ENCODE measurements at regions of chr2 and their contacts with region 1.

Region 1: GRCh38 chr2:28392297-28393113 is at the start of gene FOSL2:
- DNase-seq: peak; percentile 95
- H3K4me3 Mint-ChIP-seq: peak within 1 kb of the TSS; percentile 87
- H3K27ac Mint-ChIP-seq: peak within 1 kb of the TSS; percentile 97
- H3K4me1 Mint-ChIP-seq: peaks cover 33% of the 10 kb centered on the region
- H3K27me3 Mint-ChIP-seq: no peaks in the 10 kb centered on the region
- total RNA-seq, gene FOSL2: 146 and 156 TPM in 2 replicates

Region 2: DNA sequence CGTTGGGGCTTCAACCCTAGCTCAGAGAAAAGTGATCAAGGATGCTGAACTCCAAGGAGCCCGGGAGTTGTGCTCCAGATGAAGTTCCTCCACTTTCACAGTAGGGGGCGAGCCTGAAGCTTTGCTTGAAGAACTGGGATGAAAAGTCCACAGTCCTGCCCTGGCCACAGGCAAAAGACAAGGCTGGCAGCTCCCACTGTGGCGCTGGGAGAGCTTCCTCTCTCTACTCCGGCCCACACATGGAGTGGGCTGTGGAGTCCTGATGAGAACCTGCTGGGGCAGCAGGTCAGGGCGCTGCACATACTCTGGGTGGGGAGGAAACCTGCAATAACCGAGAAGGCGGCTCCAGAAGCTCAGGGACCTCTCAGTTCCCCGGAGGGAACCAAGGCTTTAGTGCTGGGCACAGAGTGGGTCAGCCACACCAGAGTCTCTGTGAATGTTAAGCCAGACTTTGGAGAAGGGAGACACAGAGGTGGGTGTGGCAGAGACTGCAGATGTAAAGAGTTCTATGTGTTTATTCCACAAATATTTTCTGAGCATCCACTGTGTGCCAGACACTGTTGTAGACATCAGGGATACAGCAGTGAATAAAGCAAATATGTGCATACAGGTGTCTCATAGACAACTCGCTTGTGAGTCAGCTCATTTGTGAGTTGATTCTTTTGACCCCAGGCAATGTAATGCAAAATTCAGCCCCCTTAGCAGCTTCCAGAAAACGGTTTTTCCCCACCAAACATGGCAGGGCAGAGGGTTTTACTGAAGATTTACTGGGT is 668.9 kb before region 1 on chr2:
- intact Hi-C with region 1: loop called (anchors 5 kb)
- DNase-seq: no peak
- H3K4me3 Mint-ChIP-seq: no peak overlapping the region
- H3K27ac Mint-ChIP-seq: no peak overlapping the region
- H3K4me1 Mint-ChIP-seq: peaks cover 34% of the 10 kb centered on the region
- H3K27me3 Mint-ChIP-seq: no peaks in the 10 kb centered on the region

Region 3: DNA sequence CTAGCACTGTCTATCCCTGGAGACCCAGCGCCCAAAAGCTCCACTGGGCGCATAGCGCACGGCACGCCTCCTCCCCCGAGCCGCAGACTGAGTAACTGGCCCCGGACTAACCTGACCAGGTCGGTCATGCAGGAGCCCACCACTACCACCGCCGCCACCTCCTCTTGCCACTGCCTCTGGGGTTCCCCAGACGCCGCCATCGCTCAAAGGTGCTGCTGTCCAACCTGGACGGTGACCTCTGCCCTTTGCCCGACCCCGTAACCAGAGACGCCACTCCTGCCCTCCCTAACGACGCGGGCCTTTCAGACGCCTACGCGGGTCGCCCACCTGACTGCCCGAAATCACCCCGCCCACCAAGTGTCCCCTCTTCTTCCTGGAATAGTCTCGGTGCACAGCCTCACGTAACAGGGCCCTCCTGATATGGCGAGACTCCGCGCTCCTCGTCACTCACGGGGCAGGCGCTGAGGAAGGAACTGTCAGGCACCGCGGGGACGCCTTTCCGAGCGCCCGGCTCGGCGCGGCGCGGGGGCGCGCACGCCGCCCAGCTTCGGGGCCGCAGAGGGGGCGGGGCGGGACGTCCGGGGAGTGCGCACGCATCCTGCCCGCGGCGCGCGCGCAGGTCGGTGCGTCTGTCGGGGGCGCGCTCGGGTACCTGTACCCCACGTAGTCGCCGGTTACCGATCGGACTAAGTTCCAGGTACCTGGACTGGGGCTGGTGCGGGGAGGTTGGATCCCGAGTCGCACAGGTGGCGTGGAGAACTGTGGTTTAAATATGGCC is 502.2 kb before region 1 on chr2 and contains the starts of genes BABAM2 and RBKS:
- intact Hi-C with region 1: loop called (anchors 1 kb)
- DNase-seq: peak; percentile 88
- H3K4me3 Mint-ChIP-seq: peak within 1 kb of the TSS; percentile 94
- H3K27ac Mint-ChIP-seq: peak within 1 kb of the TSS; percentile 98
- H3K4me1 Mint-ChIP-seq: peaks cover 53% of the 10 kb centered on the region
- H3K27me3 Mint-ChIP-seq: no peaks in the 10 kb centered on the region
- total RNA-seq, gene BABAM2: 49.0 and 54.5 TPM in 2 replicates
- total RNA-seq, gene RBKS: 1.8 and 3.0 TPM in 2 replicates

Region 4: GRCh38 chr2:28276076-28276618 is 116.4 kb before region 1 on chr2:
- intact Hi-C with region 1: loop called (anchors 5 kb)
- DNase-seq: no peak
- H3K4me3 Mint-ChIP-seq: no peak overlapping the region
- H3K27ac Mint-ChIP-seq: peak overlapping the region; percentile 41
- H3K4me1 Mint-ChIP-seq: peaks cover 48% of the 10 kb centered on the region
- H3K27me3 Mint-ChIP-seq: no peaks in the 10 kb centered on the region

Region 5: DNA sequence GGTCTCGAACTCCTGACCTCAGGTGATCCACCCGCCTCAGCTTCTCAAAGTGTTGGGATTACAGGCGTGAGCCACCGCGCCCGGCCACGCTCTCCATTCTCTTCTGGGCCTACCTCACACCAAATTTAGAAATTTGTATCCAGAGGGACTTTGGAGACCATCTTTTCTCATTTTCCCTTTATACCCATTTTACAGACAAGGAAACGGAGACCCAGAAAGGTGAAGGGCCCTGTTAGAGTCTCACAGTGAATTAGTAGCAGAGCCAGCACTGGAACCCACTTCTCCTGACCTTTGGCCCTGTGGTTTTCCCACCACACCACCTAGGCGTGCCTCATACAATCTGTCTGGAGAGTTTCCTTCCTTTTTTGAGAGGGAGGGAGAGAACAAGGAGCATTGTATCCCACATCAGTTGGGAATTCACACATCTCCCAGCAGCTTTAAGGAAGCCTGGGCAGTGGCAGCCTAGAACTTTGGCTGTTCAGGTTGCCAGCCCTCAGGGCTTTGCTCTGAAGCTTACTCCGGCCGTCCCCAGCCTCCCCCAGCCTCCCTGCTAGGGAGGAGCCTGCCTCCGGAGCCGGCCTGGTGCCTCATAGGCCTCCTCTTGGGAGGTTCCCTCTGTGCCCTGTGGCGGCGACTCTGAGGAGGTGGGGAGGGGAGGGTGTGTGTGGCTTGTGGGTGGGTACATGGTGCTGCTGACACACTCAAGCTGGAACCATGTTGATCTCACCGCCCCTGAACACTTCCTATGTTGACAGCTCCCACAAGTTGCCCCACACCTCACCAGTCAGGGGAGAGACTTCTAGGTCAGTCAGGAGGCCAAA is 14.0 kb after region 1 on chr2:
- intact Hi-C with region 1: loop called (anchors 1 kb)
- DNase-seq: peak; percentile 36
- H3K4me3 Mint-ChIP-seq: peak overlapping the region; percentile 21
- H3K27ac Mint-ChIP-seq: peak overlapping the region; percentile 72
- H3K4me1 Mint-ChIP-seq: peaks cover 70% of the 10 kb centered on the region
- H3K27me3 Mint-ChIP-seq: no peaks in the 10 kb centered on the region

Region 6: GRCh38 chr2:28452534-28453081 is 60.1 kb after region 1 on chr2:
- intact Hi-C with region 1: loop called (anchors 1 kb)
- DNase-seq: peak; percentile 65
- H3K4me3 Mint-ChIP-seq: no peak overlapping the region
- H3K27ac Mint-ChIP-seq: peak overlapping the region; percentile 30
- H3K4me1 Mint-ChIP-seq: peaks cover 48% of the 10 kb centered on the region
- H3K27me3 Mint-ChIP-seq: no peaks in the 10 kb centered on the region